Lower leg skin (tissue), 4 donors: ENCODE measurements at regions of chr12 and their contacts with region 1.

Region 1: GRCh38 chr12:46153268-46153872 is 115.5 kb downstream of the SLC38A1 start:
- DNase-seq: no peak
- H3K4me3 ChIP-seq: no peak overlapping the region
- CTCF ChIP-seq: no peak
- POLR2A ChIP-seq: no peak

Region 2: GRCh38 chr12:45914090-45914489 is 239.3 kb before region 1 on chr12:
- intact Hi-C with region 1: no loop called
- DNase-seq: no peak
- H3K4me3 ChIP-seq: no peak overlapping the region
- CTCF ChIP-seq: no peak
- POLR2A ChIP-seq: no peak

Region 3: DNA sequence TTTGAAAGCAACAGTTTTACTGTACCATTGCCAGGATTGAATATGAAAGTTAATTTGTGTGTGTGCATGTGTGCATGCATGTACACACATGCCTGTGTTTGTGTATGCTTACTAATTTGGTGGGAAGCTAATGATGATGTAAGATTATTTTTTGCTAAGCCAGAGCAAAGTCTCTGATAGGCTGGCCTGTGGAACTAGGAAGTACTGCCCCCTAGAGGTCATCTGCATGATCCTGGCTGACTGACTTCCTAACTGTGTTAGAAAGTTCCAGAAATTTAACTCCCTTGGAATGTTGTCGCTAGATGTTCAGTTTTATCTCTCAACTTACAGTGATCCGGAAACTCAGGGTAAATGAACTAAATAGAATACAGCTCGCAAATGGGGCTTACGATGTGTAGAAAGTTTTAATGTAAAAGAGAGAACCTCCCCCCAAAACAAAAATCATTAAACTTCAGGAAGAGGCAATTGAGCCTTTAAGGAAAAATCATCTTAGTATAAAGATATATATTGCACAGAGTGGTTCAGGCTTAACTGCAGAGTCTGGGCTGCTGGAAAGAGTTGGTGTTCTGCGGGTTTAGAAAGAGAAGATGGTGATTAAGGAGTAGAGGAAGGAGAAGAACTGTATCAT is 149.8 kb after region 1 on chr12:
- intact Hi-C with region 1: no loop called
- DNase-seq: no peak
- H3K4me3 ChIP-seq: no peak overlapping the region
- CTCF ChIP-seq: no peak
- POLR2A ChIP-seq: no peak

Region 4: DNA sequence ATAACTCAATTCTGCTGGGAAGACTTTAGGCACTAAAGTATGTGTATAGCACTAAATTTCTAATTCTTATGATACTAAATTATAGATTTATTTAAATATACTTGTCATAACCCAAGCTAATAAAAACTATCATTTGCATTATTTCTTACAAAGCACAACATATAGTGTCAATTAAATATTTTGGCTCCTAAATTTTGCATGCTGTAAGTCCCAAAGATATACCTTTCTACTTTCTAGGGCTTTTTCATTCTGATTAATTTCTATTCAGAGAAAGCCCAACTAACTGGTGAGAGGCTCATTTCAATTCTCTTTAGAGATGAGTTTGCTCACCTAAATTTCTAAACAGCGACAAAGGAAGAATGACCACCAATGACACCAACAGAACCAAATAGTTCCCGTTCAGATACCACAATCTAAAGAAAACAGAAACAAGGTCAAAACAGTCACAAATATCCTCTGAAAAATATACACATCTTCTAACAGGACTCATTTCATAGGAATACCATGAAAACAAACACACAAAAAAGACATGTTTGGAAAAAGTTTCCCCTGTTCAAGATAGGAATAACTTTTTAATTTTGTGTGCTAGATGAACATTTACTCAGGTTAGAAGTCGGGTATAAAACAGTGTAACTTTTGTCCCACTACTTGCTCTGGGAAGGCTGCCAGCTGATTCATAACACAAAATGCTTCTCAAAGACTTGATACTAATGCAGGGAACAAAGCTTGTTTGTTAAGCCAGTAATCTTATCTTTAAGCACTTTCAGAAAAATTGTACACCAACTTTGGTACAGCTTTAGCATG is 211.6 kb after region 1 on chr12:
- intact Hi-C with region 1: loop called (anchors 10 kb)
- DNase-seq: no peak
- H3K4me3 ChIP-seq: no peak overlapping the region
- CTCF ChIP-seq: no peak
- POLR2A ChIP-seq: no peak

Region 5: GRCh38 chr12:46661110-46661845 is 507.9 kb after region 1 on chr12:
- intact Hi-C with region 1: loop called (anchors 10 kb)
- DNase-seq: peak in 1 of 2 donors; percentile 42
- H3K4me3 ChIP-seq: no peak overlapping the region
- CTCF ChIP-seq: peak in 1 of 3 donors; percentile 82
- POLR2A ChIP-seq: no peak